Activated CD4-positive, alpha-beta memory T cell treated with anti-CD3 and anti-CD28 coated beads, Interleukin-2, amount 10 ng/mL, durations not matched to agents 7 days and 5 days (primary cell): ENCODE measurements at regions of chr5 and their contacts with region 1.

Region 1: GRCh38 chr5:154189819-154190594 is 526 bp upstream of the GALNT10 start:
- DNase-seq: peak; percentile 85
- H3K4me3 Mint-ChIP-seq: peak overlapping the region; percentile 80
- H3K27ac Mint-ChIP-seq: peak overlapping the region; percentile 75
- H3K4me1 Mint-ChIP-seq: peaks cover 35% of the 10 kb centered on the region
- H3K27me3 Mint-ChIP-seq: peaks cover 4% of the 10 kb centered on the region

Region 2: DNA sequence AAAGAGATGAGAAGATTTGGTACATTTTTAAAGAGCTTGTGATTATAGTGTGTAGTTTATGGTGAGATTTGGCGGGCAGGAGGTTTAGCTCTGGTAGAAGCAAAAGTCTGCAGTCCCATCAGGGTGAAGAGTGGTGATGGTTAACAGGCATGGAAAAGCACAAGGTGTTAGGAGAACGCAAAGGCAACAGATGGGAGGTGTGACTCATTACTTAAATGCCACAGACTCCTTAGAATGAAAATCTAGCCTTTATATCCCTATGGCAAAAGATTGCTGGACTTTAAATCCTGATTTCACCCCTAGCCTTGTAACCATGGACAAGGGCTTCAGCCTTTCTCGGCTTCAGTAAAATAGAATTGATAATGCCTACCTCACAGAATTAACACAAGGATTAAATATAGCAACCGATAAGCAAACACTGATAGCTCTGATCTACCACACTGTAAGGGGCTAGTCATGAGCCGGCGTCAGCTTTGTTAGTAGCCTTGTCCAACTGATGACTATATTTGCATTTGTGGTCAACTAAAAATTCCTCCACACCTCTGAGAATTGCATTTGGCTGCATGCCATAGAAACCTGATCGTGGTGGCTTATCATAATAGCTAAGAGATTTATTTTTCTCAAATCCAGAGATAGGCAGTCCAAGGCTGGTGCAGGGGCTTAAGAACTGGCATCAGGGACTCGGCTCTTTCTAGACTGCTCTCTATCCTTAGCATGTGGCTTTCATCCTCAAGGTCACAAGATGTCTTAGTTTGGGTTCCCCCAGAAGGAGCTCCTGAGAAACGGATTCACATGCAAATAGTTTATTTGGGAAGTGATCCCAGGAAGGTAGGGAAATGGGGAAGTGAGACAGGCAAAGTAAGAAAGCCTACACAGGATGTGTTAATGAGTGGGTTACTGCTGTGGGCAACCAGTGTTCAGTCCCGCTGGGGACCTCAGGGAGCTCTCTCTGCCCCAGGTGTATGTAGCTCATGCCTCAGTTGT is 131.7 kb before region 1 on chr5:
- CTCF ChIA-PET with region 1: no interaction called
- POLR2A ChIA-PET with region 1: interaction called, 10 read pairs
- DNase-seq: no peak
- H3K4me3 Mint-ChIP-seq: no peak overlapping the region
- H3K27ac Mint-ChIP-seq: peak overlapping the region; percentile 0
- H3K4me1 Mint-ChIP-seq: peaks cover 34% of the 10 kb centered on the region
- H3K27me3 Mint-ChIP-seq: no peaks in the 10 kb centered on the region

Region 3: GRCh38 chr5:154174091-154174490 is 15.9 kb before region 1 on chr5:
- CTCF ChIA-PET with region 1: interaction called, 23 read pairs
- POLR2A ChIA-PET with region 1: interaction called, 6 read pairs
- DNase-seq: no peak
- H3K4me3 Mint-ChIP-seq: no peak overlapping the region
- H3K27ac Mint-ChIP-seq: no peak overlapping the region
- H3K4me1 Mint-ChIP-seq: peaks cover 12% of the 10 kb centered on the region
- H3K27me3 Mint-ChIP-seq: peaks cover 13% of the 10 kb centered on the region

Region 4: GRCh38 chr5:154211641-154212390 is 21.8 kb after region 1 on chr5:
- CTCF ChIA-PET with region 1: interaction called, 8 read pairs
- POLR2A ChIA-PET with region 1: interaction called, 15 read pairs
- DNase-seq: no peak
- H3K4me3 Mint-ChIP-seq: no peak overlapping the region
- H3K27ac Mint-ChIP-seq: no peak overlapping the region
- H3K4me1 Mint-ChIP-seq: peaks cover 42% of the 10 kb centered on the region
- H3K27me3 Mint-ChIP-seq: no peaks in the 10 kb centered on the region

Region 5: GRCh38 chr5:154238776-154239481 is 48.9 kb after region 1 on chr5:
- CTCF ChIA-PET with region 1: interaction called, 44 read pairs
- POLR2A ChIA-PET with region 1: interaction called, 15 read pairs
- DNase-seq: no peak
- H3K4me3 Mint-ChIP-seq: no peak overlapping the region
- H3K27ac Mint-ChIP-seq: no peak overlapping the region
- H3K4me1 Mint-ChIP-seq: peaks cover 26% of the 10 kb centered on the region
- H3K27me3 Mint-ChIP-seq: no peaks in the 10 kb centered on the region

Region 6: GRCh38 chr5:154446183-154447088 is 256.4 kb after region 1 on chr5:
- CTCF ChIA-PET with region 1: no interaction called
- POLR2A ChIA-PET with region 1: interaction called, 13 read pairs
- DNase-seq: peak; percentile 47
- H3K4me3 Mint-ChIP-seq: peak overlapping the region; percentile 89
- H3K27ac Mint-ChIP-seq: peak overlapping the region; percentile 58
- H3K4me1 Mint-ChIP-seq: peaks cover 56% of the 10 kb centered on the region
- H3K27me3 Mint-ChIP-seq: no peaks in the 10 kb centered on the region